Breast epithelium (tissue), 4 donors: ENCODE measurements at regions of chr4 and their contacts with region 1.

Region 1: GRCh38 chr4:165327211-165328100 is at the start of gene MSMO1:
- DNase-seq: peak; percentile 99 to 100
- H3K4me3 ChIP-seq: peak within 1 kb of the TSS; percentile 79 to 91 (median 91)
- H3K27ac ChIP-seq: peak within 1 kb of the TSS; percentile 89 to 92
- H3K4me1 ChIP-seq: peaks cover 0 to 4% of the 10 kb centered on the region in 2 donors
- H3K27me3 ChIP-seq: no peaks in the 10 kb centered on the region
- CTCF ChIP-seq: no peak
- POLR2A ChIP-seq: peak; percentile 70
- total RNA-seq, gene MSMO1: 11.8 to 35.3 (median 24.6) TPM

Region 2: DNA sequence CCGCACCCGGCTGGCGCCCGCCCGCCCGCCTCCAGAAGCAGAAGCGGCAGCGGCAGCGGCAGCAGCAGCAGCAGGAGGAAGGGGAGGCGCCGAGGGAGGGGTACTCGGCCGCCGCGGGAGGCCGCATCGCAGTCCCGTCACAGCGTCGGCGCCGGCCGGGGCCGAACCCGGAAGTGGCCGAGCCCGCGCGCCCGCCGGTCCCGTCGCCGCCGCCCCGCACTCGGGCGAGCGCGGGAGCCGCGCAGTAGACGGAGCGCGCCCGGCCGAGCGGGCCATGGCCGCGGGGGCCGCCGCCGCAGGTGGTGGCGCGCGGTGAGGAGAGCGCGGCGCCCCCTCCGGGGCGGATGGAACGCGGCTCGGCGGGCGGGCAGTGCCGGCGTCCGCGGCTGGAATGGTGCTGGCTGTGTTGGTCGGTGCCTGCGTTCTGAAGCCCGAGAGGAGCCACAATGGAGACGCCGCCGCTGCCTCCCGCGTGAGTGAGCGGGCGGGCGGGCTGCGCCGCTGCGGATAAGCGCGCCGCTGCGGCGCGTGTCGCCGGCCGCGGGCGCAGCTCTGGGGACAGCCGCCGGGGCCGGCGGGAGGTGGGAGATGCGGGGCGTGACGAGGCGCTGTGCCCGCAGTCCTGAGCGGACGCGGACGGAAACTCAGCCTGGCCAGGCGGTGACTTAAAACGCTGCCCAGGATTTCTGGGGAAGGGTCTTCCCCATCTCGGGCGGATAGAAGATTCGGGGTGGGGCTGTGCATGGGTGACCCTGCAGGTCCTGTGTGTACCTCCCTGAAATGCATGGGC is 119.8 kb before region 1 on chr4 and contains the start of gene KLHL2:
- intact Hi-C with region 1: loop called (anchors 10 kb)
- DNase-seq: peak; percentile 65 to 74
- H3K4me3 ChIP-seq: peak within 1 kb of the TSS; percentile 72 to 98 (median 94)
- H3K27ac ChIP-seq: peak within 1 kb of the TSS; percentile 93 to 97
- H3K4me1 ChIP-seq: peaks cover 0 to 6% of the 10 kb centered on the region in 2 donors
- H3K27me3 ChIP-seq: no peaks in the 10 kb centered on the region
- CTCF ChIP-seq: no peak
- POLR2A ChIP-seq: no peak
- total RNA-seq, gene KLHL2: 20.2 to 60.4 (median 38.0) TPM

Region 3: GRCh38 chr4:165489786-165490185 is 162.3 kb after region 1 on chr4:
- intact Hi-C with region 1: no loop called
- DNase-seq: no peak
- H3K4me3 ChIP-seq: no peak overlapping the region
- H3K27ac ChIP-seq: no peak overlapping the region
- H3K4me1 ChIP-seq: no peaks in the 10 kb centered on the region
- H3K27me3 ChIP-seq: no peaks in the 10 kb centered on the region
- CTCF ChIP-seq: no peak
- POLR2A ChIP-seq: no peak